Activated B cell treated with CpG ODN at 0.5 μM for 24 hours (primary cell): ENCODE measurements at regions of chr4 and their contacts with region 1.

Region 1: GRCh38 chr4:67746797-67747495 is 7.2 kb downstream of the GNRHR start:
- DNase-seq: no peak
- ATAC-seq: no peak
- H3K4me3 Mint-ChIP-seq: no peak overlapping the region
- H3K27ac Mint-ChIP-seq: no peak overlapping the region
- H3K4me1 Mint-ChIP-seq: peaks cover 5% of the 10 kb centered on the region
- H3K27me3 Mint-ChIP-seq: no peaks in the 10 kb centered on the region
- CTCF ChIP-seq: no peak

Region 2: DNA sequence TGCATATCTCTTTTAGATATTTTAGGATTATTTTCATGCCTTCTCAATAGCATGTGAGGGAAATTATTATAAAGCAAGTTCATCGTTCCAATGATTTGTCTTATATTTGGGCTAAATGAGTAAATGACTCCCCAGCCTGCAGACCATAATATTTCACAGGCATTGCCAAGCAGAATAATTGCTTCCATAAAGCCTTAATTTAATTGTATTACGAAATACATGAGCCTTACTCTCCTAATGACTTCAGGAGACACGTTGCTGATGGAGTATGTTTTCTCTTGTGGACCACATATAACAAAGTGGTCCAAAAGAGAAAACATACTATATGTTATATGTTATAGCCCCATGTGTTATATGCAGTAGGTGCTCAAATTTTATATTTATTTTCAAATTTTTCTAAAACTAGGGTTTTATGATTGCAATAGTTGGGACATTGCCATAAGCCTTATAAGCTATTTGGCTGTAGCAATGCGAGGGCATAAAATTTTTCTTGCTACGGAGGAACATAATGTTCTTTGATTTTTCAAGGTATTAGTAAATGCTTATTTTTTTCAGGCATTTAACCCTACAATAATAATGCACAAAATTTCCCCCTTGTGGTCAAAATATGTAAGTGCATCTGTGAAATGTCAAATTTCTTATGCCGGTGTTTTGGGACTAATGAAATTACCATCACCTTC is 163.1 kb after region 1 on chr4:
- CTCF ChIA-PET with region 1: no interaction called
- POLR2A ChIA-PET with region 1: no interaction called
- intact Hi-C with region 1: loop called (anchors 5 kb)
- DNase-seq: no peak
- ATAC-seq: no peak
- H3K4me3 Mint-ChIP-seq: no peak overlapping the region
- H3K27ac Mint-ChIP-seq: no peak overlapping the region
- H3K4me1 Mint-ChIP-seq: no peaks in the 10 kb centered on the region
- H3K27me3 Mint-ChIP-seq: peaks cover 13% of the 10 kb centered on the region
- CTCF ChIP-seq: peak; percentile 64

Region 3: GRCh38 chr4:67934628-67935027 is 187.7 kb after region 1 on chr4:
- CTCF ChIA-PET with region 1: no interaction called
- POLR2A ChIA-PET with region 1: no interaction called
- intact Hi-C with region 1: no loop called
- DNase-seq: no peak
- ATAC-seq: no peak
- H3K4me3 Mint-ChIP-seq: no peak overlapping the region
- H3K27ac Mint-ChIP-seq: no peak overlapping the region
- H3K4me1 Mint-ChIP-seq: no peaks in the 10 kb centered on the region
- H3K27me3 Mint-ChIP-seq: peaks cover 2% of the 10 kb centered on the region
- CTCF ChIP-seq: no peak